Activated T-helper 2 cell treated with anti-CD3 and anti-CD28 coated beads, Interferon-gamma antibody, Interleukin-2, Interleukin-4, amounts not matched to agents 10 μg/mL and 5 μg/mL and 100 μg/mL, durations not matched to agents 14 hours and 24 hours and 36 hours (primary cell): ENCODE measurements at regions of chr2 and their contacts with region 1.

Region 1: DNA sequence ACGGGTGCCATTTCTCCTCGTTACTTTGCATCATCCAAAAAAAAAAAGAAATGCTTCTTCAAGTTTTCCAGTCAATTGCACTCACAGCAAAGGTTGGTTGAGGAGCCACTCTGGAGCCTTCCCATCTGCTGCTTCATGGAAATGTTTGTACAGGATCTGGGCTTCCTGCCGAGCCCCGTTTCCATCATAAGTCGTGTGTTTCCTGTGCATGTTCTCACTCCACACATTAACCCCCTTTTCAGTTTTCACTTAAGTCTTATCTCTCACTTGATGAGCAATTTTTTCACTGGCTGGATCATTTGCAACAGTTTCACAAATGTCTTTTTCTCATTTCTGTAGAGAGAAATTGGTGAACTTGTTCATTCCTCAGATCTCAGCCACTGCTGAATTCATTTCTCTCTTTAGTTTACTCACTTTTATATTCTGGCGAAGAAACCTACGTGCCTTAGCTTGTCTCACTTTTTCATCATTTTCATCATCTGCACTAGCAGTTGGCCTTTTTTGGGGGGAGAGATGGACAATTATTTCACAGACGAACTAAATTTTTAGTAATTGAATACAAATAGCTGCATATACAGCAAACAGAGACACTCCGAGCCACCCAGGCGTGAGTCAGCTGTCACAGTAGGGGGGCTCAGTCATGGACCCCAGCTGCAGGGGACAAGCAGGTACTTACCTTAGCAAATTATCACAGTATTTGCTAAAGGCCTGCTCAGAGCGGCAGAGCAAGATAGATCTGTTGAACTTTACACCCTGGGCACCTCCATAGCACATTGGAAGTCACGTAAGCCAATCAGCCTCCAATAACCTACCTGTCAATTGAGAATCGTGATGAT is 750.8 kb upstream of the ID2 start:
- DNase-seq: no peak
- H3K4me3 Mint-ChIP-seq: peak overlapping the region; percentile 17
- H3K27ac Mint-ChIP-seq: peak overlapping the region; percentile 85
- H3K4me1 Mint-ChIP-seq: peaks cover 36% of the 10 kb centered on the region
- H3K27me3 Mint-ChIP-seq: no peaks in the 10 kb centered on the region

Region 2: DNA sequence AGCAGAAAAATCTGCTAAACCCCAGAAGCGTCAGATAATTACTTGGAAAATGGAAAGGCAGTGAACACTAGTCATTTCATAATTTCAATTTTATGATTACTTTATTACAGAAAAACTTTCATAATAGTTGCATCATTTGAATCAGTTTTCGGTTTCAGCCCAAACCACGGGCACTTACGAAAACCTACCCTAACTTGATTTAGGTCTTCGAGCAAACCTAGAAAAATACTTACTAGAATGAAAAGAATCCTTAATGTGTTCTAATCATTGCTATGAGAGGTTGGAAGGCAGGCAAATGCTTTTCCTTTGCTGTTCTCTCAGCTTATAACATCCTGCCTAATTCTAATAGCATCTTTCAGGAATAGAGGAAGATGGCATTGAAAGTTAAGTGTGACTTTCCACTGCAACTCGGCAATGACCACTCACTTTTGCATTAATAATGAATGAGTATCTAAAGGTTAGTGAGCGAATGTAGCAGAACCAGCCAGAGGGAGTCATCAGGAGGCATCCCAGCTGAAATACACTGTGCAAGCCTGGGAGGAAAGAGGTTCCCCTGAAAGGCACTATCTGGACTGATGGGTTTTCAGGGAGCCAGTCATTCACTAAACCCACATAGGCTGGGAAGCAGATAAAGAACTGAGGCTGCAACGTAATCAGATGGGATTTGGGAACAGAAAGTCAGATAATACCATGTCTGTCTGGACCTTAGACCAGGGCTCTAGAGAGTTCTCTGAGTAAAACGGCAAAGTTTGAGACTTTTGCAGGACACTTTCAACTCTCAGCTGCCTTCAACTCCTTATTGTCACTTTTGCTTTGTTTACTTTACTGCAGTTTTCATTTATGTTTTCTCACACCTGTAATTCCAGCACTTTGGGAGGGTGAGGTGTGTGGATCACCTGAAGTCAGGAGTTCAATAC is 493.0 kb before region 1 on chr2:
- intact Hi-C with region 1: loop called (anchors 1 kb)
- DNase-seq: no peak
- H3K4me3 Mint-ChIP-seq: peak overlapping the region; percentile 39
- H3K27ac Mint-ChIP-seq: peak overlapping the region; percentile 95
- H3K4me1 Mint-ChIP-seq: peaks cover 79% of the 10 kb centered on the region
- H3K27me3 Mint-ChIP-seq: no peaks in the 10 kb centered on the region

Region 3: DNA sequence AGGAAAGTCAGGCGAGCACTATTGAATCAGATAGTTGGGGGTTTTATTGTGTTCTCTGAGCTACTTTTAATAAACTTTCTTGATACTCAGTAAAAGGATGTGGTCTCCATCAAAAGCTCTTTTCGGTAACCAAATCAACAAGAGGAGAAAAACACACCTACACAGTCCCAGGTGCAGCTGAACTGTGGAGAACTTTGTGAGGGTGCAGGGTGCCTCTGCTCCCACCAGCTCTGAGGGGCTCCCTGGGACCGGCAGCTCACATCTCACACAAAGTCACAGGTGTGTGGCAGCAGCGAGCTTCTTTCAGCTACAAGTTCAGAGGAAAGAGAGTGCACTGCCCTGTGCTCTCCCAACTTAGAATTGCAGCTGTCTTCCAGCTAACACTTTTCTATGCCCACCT is 363.4 kb before region 1 on chr2:
- intact Hi-C with region 1: loop called (anchors 5 kb)
- DNase-seq: peak; percentile 53
- H3K4me3 Mint-ChIP-seq: peak overlapping the region; percentile 37
- H3K27ac Mint-ChIP-seq: peak overlapping the region; percentile 82
- H3K4me1 Mint-ChIP-seq: peaks cover 63% of the 10 kb centered on the region
- H3K27me3 Mint-ChIP-seq: no peaks in the 10 kb centered on the region

Region 4: GRCh38 chr2:7730449-7730848 is 200.6 kb before region 1 on chr2:
- intact Hi-C with region 1: no loop called
- DNase-seq: no peak
- H3K4me3 Mint-ChIP-seq: peak overlapping the region; percentile 89
- H3K27ac Mint-ChIP-seq: peak overlapping the region; percentile 88
- H3K4me1 Mint-ChIP-seq: peaks cover 56% of the 10 kb centered on the region
- H3K27me3 Mint-ChIP-seq: no peaks in the 10 kb centered on the region

Region 5: GRCh38 chr2:7758073-7758759 is 172.8 kb before region 1 on chr2:
- intact Hi-C with region 1: loop called (anchors 5 kb)
- DNase-seq: no peak
- H3K4me3 Mint-ChIP-seq: no peak overlapping the region
- H3K27ac Mint-ChIP-seq: peak overlapping the region; percentile 78
- H3K4me1 Mint-ChIP-seq: peaks cover 18% of the 10 kb centered on the region
- H3K27me3 Mint-ChIP-seq: no peaks in the 10 kb centered on the region

Region 6: DNA sequence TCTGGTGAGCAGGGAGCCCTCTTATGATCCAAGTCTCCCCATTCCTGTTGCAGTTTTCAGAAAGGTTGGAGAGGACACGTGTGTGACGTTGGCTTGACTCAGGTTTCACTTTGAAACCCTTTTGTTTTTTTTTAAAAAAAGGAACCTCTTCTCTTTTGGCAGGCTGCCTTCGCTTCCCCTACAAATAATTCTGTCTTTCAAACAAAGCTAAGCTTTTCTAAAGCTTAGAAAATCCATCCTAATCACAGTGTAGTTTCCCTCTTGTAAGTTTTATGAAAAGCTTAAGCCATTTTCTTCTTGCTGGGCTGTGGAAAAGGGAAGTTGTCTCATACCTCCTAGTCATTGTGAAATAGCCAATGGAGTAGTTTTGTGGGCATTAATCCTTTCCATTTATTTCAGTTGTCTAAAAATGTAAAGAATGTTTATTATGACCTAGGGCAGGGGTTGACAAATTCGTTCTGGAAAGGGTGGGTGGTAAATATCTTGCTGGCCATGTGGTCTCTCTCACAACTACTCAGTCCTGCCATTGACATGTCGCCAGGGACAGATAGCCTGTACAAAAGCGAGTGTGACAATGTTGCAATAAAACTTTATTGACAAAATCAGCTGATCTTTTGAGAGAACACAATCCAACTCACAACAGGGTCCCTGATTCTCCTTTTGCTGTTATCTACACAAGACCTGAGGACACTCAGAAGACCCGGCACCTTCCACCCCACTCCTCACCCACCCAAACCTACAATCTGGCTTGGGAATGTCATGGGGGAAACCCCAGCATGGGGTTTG is 135.0 kb before region 1 on chr2:
- intact Hi-C with region 1: no loop called
- DNase-seq: no peak
- H3K4me3 Mint-ChIP-seq: no peak overlapping the region
- H3K27ac Mint-ChIP-seq: peak overlapping the region; percentile 79
- H3K4me1 Mint-ChIP-seq: peaks cover 7% of the 10 kb centered on the region
- H3K27me3 Mint-ChIP-seq: no peaks in the 10 kb centered on the region

Region 7: DNA sequence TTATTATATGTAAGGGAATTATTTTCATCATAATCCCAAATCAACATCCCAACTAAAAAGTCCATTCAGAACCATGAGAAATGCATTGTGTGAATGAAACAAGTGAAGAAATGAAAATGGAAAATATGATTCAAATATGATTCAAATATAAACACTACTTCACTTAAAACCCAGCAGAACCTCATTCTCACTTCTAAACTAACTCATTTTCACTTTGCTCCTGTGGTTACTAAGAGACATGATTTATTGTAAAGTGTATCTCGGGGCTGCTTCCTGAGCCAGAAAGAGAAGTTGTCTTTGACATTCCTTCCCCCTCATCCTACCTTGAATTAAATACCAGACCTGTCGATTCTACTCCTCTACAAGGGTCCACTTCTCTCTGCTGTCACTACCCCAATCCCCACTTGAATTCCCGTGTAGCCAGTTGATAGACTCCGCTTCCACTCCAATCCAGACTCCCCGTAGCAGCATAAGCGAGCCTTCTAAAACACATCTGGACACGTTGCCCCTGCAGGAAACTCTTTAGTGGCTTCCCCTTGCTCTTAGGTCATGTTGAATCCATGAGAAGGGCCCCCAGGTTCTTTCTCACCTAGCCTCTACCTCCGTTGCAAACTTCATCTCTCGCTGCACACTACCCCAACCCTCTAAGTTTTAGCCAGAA is 53.8 kb after region 1 on chr2:
- intact Hi-C with region 1: loop called (anchors 1 kb)
- DNase-seq: no peak
- H3K4me3 Mint-ChIP-seq: no peak overlapping the region
- H3K27ac Mint-ChIP-seq: peak overlapping the region; percentile 89
- H3K4me1 Mint-ChIP-seq: peaks cover 32% of the 10 kb centered on the region
- H3K27me3 Mint-ChIP-seq: no peaks in the 10 kb centered on the region

Region 8: DNA sequence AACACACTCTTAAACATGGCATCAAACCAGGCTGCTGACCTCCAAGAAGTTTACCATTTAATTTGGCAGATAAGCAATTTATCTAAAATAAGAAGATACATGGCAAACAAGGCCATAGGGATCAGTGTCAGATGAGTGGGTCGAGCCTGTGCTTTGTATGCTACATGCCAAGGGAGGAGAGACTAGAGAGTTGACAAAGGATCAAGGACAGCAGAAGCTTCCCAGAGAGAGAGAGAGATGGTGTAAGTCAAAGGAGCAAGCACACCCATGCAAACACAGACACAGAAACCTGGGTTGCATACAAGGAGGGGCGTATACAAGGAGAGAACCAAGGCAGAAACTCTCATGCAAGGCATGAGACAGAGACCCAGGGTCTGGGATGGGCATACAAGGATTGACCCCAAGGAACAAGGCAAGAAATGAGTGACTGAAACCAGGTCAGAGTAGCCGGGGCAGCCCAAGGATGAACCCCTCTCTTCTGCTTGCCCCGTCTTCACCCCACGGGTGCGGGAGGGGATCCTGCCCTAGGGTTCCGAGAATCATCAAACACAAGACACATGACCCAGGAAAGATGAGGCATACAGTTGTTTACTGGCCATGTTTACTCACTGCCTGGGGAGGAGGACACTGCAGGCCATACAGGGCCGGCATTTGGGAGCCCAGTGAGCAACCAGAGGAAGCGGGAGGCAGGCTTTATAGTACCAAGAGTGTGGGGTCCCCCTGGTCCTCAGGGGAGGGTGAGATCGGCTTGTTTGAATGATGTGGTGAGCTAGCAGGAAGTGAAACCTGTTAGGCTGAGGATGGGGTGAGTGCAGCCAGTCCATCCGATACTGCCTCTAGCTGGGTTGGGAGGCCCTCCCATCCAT is 221.6 kb after region 1 on chr2:
- intact Hi-C with region 1: loop called (anchors 2 kb)
- DNase-seq: no peak
- H3K4me3 Mint-ChIP-seq: no peak overlapping the region
- H3K27ac Mint-ChIP-seq: no peak overlapping the region
- H3K4me1 Mint-ChIP-seq: peaks cover 42% of the 10 kb centered on the region
- H3K27me3 Mint-ChIP-seq: no peaks in the 10 kb centered on the region

Region 9: GRCh38 chr2:8606226-8606625 is 675.2 kb after region 1 on chr2:
- intact Hi-C with region 1: loop called (anchors 10 kb)
- DNase-seq: no peak
- H3K4me3 Mint-ChIP-seq: no peak overlapping the region
- H3K27ac Mint-ChIP-seq: peak overlapping the region; percentile 53
- H3K4me1 Mint-ChIP-seq: peaks cover 55% of the 10 kb centered on the region
- H3K27me3 Mint-ChIP-seq: peaks cover 7% of the 10 kb centered on the region